ENCODE measurements at regions of chr13 and their contacts with region 1.

Region 1: GRCh38 chr13:41289463-41289881 is 21.6 kb upstream of the NAA16 start:
- DNase-seq: no peak
- ATAC-seq: no peak
- H3K4me3 ChIP-seq: no peak overlapping the region
- H3K4me3 Mint-ChIP-seq: no peak overlapping the region
- H3K27ac ChIP-seq: no peak overlapping the region
- H3K27ac Mint-ChIP-seq: no peak overlapping the region
- H3K4me1 ChIP-seq: peaks cover 12 to 22% of the 10 kb centered on the region in 2 experiments
- H3K4me1 Mint-ChIP-seq: peaks cover 31 to 37% (median 33%) of the 10 kb centered on the region in 3 donors
- H3K27me3 ChIP-seq: no peaks in the 10 kb centered on the region
- H3K27me3 Mint-ChIP-seq: peaks cover 0 to 1% of the 10 kb centered on the region in 2 donors

Region 2: GRCh38 chr13:41268764-41269163 is 20.7 kb before region 1 on chr13:
- CTCF ChIA-PET with region 1: interaction called, 3 to 6 read pairs
- POLR2A ChIA-PET with region 1: interaction called, 3 to 11 read pairs
- DNase-seq: peak in 1 of 35 experiments; percentile 22
- ATAC-seq: no peak
- H3K4me3 ChIP-seq: no peak overlapping the region
- H3K4me3 Mint-ChIP-seq: no peak overlapping the region
- H3K27ac ChIP-seq: no peak overlapping the region
- H3K27ac Mint-ChIP-seq: no peak overlapping the region
- H3K4me1 ChIP-seq: peaks cover 12 to 22% of the 10 kb centered on the region in 2 experiments
- H3K4me1 Mint-ChIP-seq: peaks cover 21 to 28% (median 24%) of the 10 kb centered on the region in 3 donors
- H3K27me3 ChIP-seq: no peaks in the 10 kb centered on the region
- H3K27me3 Mint-ChIP-seq: no peaks in the 10 kb centered on the region

Measured in T-cell (primary cell).